Posterior vena cava (tissue), 2 donors: ENCODE measurements at regions of chr9 and their contacts with region 1.

Region 1: GRCh38 chr9:69672596-69673310 is 582 bp upstream of the APBA1 start:
- DNase-seq: peak; percentile 95

Region 2: GRCh38 chr9:69731348-69731747 is 58.6 kb after region 1 on chr9:
- intact Hi-C with region 1: loop called in 1 of 2 experiments (anchors 10 kb)
- DNase-seq: no peak

Region 3: DNA sequence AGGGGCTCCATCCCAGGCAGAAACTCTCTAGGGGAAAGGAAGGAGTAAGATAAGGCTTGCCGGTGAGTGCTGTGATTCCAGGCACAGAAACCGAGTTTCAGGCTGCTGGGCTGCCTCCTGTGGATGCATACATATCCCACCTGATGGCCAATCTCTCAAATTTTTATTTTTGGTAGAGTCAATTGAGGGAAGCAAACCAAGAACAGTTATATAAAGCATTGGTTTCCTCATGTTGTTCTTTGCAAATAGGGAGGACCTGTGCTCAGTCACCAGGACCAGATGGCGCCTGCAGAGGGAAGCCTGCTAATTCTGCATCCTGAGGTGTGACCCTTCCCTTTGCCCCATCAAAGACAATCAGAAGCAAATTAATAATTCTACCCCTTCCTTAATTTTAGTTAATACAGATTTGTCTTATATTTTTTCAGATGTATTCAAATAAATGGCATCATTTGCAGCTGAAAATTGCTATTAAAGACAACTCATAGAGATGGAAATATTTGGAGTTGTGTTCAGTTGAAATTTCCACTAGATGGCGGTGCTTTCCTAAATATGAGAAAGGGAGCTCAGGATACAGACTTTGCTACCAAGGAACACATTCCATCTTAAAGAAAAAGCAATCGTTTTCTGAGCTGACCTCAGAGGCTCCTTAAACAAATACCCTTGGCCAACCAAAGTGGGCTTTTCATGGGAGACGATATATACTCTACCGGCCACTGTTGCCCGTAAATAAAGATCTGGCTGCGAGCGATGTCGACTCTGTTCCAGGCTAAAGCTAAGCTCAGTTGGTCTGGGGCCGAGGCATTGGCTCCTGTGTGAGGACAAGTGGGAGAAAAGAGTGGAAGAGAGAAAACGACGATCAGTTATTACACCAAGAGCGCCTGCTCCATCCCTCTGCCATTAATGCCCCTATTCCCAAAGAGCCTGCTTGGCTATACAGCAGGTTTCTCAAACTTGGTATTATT is 967.4 kb after region 1 on chr9:
- intact Hi-C with region 1: no loop called
- DNase-seq: no peak